ENCODE measurements at regions of chr17 and their contacts with region 1.

Region 1: GRCh38 chr17:49217651-49218413 is 7.3 kb downstream of the ABI3 start:
- DNase-seq: peak; percentile 93
- ATAC-seq: peak; percentile 68
- H3K4me3 ChIP-seq: no peak overlapping the region; the same call in 1 of the 2 replicates
- H3K27ac ChIP-seq: peak overlapping the region; percentile 77
- H3K4me1 ChIP-seq: peaks cover 64% of the 10 kb centered on the region
- H3K27me3 ChIP-seq: no peaks in the 10 kb centered on the region
- CTCF ChIP-seq: no peak
- EP300 ChIP-seq: peak; percentile 32 to 84; a peak in 2 of 4 replicates
- POLR2A ChIP-seq: peak; percentile 68
- RAD21 ChIP-seq: peak; percentile 23; the same call in 1 of the 2 replicates

Region 2: DNA sequence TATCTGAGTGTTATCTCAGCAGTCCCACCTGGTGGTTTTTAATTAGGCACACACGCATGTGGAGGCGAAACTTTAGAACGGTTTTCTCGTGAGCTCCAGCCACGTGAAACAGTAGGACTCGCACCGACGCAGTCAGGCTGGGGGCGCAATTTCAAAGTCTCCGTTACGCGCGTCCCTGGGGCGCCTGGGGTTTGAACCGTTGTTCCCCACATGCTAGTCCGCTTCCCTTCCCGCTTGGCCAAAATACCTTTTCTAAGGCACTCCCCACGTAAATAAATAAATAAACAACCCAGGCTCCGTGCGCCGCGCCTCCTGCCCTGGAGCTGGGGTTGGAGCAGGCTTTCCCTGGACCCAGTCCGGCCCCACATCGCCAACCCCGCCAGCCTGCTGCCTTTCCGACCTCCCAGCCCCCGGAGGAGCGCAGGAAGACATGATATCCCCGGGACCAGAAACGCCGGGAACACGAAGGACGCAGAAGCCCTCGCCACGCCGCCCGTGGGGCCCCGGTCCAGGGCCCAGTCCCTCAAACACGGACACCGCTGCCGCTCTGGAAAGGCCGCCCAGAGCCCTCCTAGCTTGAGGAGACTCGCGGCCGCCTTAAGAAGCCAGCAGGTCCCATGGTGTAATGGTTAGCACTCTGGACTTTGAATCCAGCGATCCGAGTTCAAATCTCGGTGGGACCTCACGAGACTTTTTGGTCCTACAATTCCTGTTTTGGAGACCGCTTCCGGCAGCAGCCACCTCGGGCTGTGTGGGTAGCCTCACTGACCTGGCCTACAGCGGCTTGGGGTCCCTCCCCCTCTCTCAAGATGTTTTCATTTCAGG is 25.7 kb before region 1 on chr17:
- CTCF ChIA-PET with region 1: interaction called, 127 read pairs
- POLR2A ChIA-PET with region 1: interaction called, 537 read pairs
- RAD21 ChIA-PET with region 1: interaction called, 355 read pairs
- SMC1A ChIA-PET with region 1: interaction called, 354 read pairs
- in situ Hi-C with region 1: no loop called
- intact Hi-C with region 1: loop called (anchors 1 kb)
- DNase-seq: peak; percentile 77
- ATAC-seq: peak; percentile 63
- H3K4me3 ChIP-seq: peak overlapping the region; percentile 85
- H3K27ac ChIP-seq: peak overlapping the region; percentile 98
- H3K4me1 ChIP-seq: peaks cover 28% of the 10 kb centered on the region
- H3K27me3 ChIP-seq: no peaks in the 10 kb centered on the region
- CTCF ChIP-seq: peak; percentile 32 to 54 (median 37); a peak in 4 of 6 replicates
- EP300 ChIP-seq: peak in 1 of 2 experiments; percentile 72; a peak in 1 of 4 replicates
- POLR2A ChIP-seq: peak; percentile 24; the same call in 1 of the 2 replicates
- RAD21 ChIP-seq: peak; percentile 14; the same call in 1 of the 2 replicates

Region 3: GRCh38 chr17:49277638-49278037 is 59.8 kb after region 1 on chr17:
- CTCF ChIA-PET with region 1: no interaction called
- POLR2A ChIA-PET with region 1: no interaction called
- RAD21 ChIA-PET with region 1: no interaction called
- SMC1A ChIA-PET with region 1: no interaction called
- in situ Hi-C with region 1: no loop called
- intact Hi-C with region 1: no loop called
- DNase-seq: no peak
- ATAC-seq: no peak
- H3K4me3 ChIP-seq: no peak overlapping the region
- H3K27ac ChIP-seq: no peak overlapping the region
- H3K4me1 ChIP-seq: no peaks in the 10 kb centered on the region
- H3K27me3 ChIP-seq: no peaks in the 10 kb centered on the region
- CTCF ChIP-seq: no peak
- EP300 ChIP-seq: no peak
- POLR2A ChIP-seq: no peak
- RAD21 ChIP-seq: no peak